H1 (cell line): ENCODE measurements at regions of chr11 and their contacts with region 1.

Region 1: GRCh38 chr11:975827-976226 is 50.2 kb downstream of the AP2A2 start:
- DNase-seq: peak; percentile 33 to 69
- H3K4me3 ChIP-seq: no peak overlapping the region
- H3K27ac ChIP-seq: no peak overlapping the region
- H3K4me1 ChIP-seq: peaks cover 0 to 6% (median 0%) of the 10 kb centered on the region in 4 experiments; a peak in 2 of 7 replicates
- H3K27me3 ChIP-seq: no peaks in the 10 kb centered on the region
- CTCF ChIP-seq: peak; percentile 62 to 73 (median 68)
- EP300 ChIP-seq: no peak
- POLR2A ChIP-seq: no peak
- RAD21 ChIP-seq: peak; percentile 59 to 75

Region 2: DNA sequence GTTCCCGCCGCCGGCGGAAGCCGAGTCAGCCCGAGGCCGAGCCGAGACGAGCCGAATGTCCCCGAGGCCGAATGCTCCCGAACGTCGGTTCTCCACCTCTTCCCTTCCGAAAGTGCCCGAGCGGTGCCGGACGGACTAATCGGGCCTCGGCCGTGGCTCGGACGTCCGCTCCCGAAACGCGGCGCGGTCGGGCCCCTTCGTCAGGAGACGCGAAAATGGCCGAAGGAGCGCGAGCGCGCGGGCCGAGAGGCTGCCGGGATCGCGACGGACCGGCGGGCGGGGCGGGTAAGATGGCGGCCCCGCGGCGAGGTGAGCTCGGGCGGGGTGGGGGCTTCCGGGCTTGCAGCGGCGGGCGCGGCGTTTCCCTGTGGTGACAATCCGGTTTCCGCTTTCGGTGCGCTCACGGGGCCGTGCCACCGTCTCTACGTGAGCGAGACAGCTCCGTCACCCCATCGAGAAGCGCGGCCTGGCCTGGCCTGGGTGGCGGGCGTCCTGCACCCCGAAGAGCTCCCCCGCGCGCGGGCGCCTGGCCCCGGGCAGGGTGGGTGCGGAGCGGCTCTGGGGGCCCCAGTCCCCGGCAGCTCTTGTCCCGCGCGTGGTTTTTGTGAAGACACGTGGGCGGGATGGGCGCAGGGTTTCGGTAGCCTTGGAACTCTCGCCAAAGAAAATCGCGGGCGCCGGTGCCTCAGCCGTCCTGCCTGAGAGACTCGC is 280.1 kb before region 1 on chr11 and contains the start of gene TMEM80:
- CTCF ChIA-PET with region 1: no interaction called
- POLR2A ChIA-PET with region 1: no interaction called
- DNase-seq: peak; percentile 91 to 99
- H3K4me3 ChIP-seq: peak within 1 kb of the TSS; percentile 62 to 92 (median 77)
- H3K27ac ChIP-seq: peak within 1 kb of the TSS; percentile 97
- H3K4me1 ChIP-seq: peaks cover 0 to 28% (median 11%) of the 10 kb centered on the region in 4 experiments; a peak in 6 of 7 replicates
- H3K27me3 ChIP-seq: no peaks in the 10 kb centered on the region
- CTCF ChIP-seq: 0 out of 4 replicates have a peak, but pooled peaks of 1 of the 3 experiments have one; percentile 0
- EP300 ChIP-seq: no peak
- POLR2A ChIP-seq: peak in 1 of 2 experiments; percentile 59; a peak in 1 of 3 replicates
- RAD21 ChIP-seq: no peak
- total RNA-seq, gene TMEM80: 7.3 and 8.0 TPM in 2 replicates

Region 3: GRCh38 chr11:706957-707816 is 268.6 kb before region 1 on chr11:
- CTCF ChIA-PET with region 1: no interaction called
- POLR2A ChIA-PET with region 1: no interaction called
- DNase-seq: no peak
- H3K4me3 ChIP-seq: peak overlapping the region; percentile 38 to 64 (median 49)
- H3K27ac ChIP-seq: no peak overlapping the region
- H3K4me1 ChIP-seq: peaks cover 0 to 48% (median 33%) of the 10 kb centered on the region in 4 experiments; a peak in 6 of 7 replicates
- H3K27me3 ChIP-seq: no peaks in the 10 kb centered on the region
- CTCF ChIP-seq: no peak; a peak in 1 of 4 replicates
- EP300 ChIP-seq: no peak
- POLR2A ChIP-seq: no peak
- RAD21 ChIP-seq: no peak

Region 4: DNA sequence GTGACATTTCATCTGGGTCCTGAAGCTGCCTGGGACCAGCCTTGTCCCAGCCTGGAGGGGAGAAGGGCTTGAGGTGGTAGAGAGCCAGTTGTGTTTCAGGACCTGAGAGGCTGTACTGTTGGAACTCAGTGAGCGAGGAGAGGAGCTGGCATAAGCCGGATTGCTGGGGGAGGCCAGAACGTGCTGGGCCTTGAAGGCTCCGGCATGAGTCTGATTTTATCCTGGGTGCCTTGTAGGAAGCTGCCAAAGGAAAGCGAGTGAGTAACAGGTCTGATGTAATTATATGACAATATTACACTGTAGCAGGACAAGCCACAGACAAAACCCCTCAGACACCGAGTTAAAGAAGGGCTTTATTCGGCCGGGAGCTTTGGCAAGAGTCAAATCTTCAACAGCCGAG is 33.0 kb before region 1 on chr11:
- CTCF ChIA-PET with region 1: interaction called, 36 read pairs
- POLR2A ChIA-PET with region 1: interaction called, 6 read pairs
- DNase-seq: no peak
- H3K4me3 ChIP-seq: no peak overlapping the region
- H3K27ac ChIP-seq: no peak overlapping the region
- H3K4me1 ChIP-seq: peaks cover 25 to 41% (median 33%) of the 10 kb centered on the region in 4 experiments
- H3K27me3 ChIP-seq: no peaks in the 10 kb centered on the region
- CTCF ChIP-seq: no peak
- EP300 ChIP-seq: no peak
- POLR2A ChIP-seq: no peak
- RAD21 ChIP-seq: no peak

Region 5: DNA sequence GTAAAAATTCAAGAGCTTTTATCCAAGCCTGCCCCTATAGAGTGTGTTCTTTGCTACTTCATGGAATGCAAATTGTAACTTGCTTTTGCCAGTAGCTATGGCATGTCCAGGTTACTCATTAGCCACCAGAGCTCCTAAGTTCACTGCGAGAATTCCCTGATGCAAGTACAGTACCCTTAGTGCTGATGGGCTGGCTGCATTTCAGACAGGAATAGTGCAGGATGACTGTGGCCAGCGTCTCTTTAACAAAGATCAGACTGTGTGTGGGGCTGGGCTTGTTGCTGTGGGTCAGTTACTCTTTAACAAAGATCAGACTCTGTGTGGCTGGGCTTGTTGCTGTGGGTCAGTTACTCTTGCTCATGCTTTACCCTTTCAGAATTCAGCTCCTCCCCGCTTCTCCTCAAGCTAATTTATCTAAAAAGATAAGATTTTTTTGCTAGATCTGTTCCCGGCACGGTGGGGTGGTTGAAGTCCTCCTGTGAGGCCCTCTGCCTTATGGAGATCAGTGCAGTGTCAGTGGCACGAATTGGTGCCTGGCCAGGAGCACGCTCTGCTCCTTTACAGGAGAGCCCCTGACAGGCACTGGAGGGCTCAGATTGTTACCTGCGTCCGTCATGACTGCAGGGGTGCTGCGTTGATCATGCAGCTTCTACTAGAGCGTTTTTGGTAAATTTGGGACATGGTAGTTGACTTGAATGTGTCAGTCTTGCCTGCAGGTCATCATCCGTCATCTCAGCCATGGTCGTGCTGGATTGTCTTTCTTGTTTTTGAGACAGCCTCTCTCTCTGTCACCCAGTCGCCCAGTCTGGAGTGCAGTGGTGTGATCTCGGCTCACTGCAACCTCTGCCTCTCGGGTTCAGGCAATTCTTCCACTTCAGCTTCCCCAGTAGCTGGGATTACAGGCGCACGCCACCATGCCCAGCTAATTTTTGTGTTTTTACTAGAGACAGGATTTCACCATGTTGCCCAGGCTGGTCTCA is 23.1 kb before region 1 on chr11:
- CTCF ChIA-PET with region 1: interaction called, 19 read pairs
- POLR2A ChIA-PET with region 1: interaction called, 5 read pairs
- DNase-seq: no peak
- H3K4me3 ChIP-seq: no peak overlapping the region
- H3K27ac ChIP-seq: no peak overlapping the region
- H3K4me1 ChIP-seq: peaks cover 0 to 15% (median 7%) of the 10 kb centered on the region in 4 experiments; a peak in 4 of 7 replicates
- H3K27me3 ChIP-seq: no peaks in the 10 kb centered on the region
- CTCF ChIP-seq: no peak
- EP300 ChIP-seq: no peak
- POLR2A ChIP-seq: no peak
- RAD21 ChIP-seq: no peak

Region 6: DNA sequence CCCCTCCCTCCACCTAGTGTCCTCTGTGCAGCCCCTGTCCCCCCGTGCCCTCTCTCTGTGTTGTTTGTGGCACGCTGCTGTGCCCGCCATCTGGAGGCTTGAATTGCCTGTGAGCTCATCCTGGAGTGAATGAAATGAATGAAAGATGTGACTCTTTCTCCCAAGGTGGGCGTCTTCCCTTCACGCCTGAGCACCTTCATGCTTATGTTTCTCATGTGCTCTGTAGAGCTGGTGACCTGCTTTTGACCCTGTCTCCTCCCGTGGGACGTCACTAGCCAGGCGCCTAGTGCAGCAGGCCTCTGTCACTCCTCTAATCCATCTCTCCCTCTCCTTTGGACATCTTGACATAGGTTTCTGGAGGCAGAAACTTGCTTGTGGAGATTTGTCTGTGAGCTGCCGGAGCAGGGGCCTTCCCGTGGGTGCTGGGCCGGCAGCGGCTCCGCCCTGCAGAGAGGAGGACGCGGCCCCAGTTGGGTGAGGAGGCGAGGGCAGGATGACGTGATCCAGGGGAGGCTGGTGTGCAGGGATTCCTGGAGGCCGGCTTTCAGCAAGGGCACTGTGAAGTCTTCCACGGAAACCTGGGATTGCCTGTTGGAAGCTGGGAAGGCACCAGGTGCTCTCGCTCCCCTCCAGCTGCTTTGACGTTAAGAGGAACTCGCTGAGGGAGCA is 20.1 kb after region 1 on chr11:
- CTCF ChIA-PET with region 1: interaction called, 10 read pairs
- POLR2A ChIA-PET with region 1: no interaction called
- DNase-seq: no peak
- H3K4me3 ChIP-seq: no peak overlapping the region
- H3K27ac ChIP-seq: no peak overlapping the region
- H3K4me1 ChIP-seq: no peaks in the 10 kb centered on the region
- H3K27me3 ChIP-seq: no peaks in the 10 kb centered on the region
- CTCF ChIP-seq: no peak
- EP300 ChIP-seq: no peak
- POLR2A ChIP-seq: no peak
- RAD21 ChIP-seq: no peak